Head of caudate nucleus (tissue), 42 donors: ENCODE measurements at regions of chr5 and their contacts with region 1.

Region 1: GRCh38 chr5:61817472-61818326 is 485.6 kb downstream of the ZSWIM6 start:
- DNase-seq: peak; percentile 51 to 90 (median 76)

Region 2: DNA sequence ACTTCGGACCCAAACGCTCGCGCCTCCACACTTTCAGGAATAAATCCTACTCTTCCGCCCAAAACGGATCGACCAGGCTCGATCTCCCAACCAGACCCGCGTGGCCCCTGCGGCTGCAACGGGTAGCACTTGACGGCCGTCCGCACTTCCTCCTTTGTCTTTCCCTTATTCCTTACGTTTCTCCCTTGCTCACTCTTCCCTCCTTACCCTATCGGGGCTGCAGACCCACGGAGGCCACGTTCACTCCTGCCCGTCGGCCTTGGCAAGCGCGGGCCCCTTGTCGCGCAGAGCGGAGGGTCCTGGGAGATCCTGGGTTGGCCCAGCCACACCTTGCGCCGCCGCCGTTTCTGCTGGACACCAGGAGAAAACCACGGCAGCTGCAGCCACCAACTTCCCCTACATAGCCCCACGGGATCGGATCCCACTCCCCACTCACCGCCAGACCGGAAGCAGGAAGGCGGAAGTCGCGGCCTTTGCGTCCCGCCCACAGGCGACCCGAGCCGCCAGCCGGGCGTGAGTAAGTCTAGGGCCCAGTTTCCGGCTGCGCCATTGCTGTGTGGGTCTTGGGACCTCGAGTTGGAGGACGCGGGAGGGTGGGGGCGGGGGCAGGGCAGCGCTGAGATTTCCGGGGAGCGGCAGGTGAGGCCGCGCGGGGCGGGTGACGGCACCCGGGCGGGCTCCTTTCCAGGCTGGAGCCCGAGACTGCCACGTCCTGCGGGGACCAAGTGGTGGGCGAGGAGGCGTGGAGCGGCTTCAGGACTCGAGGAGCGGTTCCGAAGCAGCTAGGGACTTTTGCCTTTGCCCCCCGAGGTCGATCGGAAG is 655.5 kb before region 1 on chr5 and contains the start of gene SMIM15:
- intact Hi-C with region 1: loop called (anchors 10 kb)
- DNase-seq: peak; percentile 64 to 94 (median 86)

Region 3: DNA sequence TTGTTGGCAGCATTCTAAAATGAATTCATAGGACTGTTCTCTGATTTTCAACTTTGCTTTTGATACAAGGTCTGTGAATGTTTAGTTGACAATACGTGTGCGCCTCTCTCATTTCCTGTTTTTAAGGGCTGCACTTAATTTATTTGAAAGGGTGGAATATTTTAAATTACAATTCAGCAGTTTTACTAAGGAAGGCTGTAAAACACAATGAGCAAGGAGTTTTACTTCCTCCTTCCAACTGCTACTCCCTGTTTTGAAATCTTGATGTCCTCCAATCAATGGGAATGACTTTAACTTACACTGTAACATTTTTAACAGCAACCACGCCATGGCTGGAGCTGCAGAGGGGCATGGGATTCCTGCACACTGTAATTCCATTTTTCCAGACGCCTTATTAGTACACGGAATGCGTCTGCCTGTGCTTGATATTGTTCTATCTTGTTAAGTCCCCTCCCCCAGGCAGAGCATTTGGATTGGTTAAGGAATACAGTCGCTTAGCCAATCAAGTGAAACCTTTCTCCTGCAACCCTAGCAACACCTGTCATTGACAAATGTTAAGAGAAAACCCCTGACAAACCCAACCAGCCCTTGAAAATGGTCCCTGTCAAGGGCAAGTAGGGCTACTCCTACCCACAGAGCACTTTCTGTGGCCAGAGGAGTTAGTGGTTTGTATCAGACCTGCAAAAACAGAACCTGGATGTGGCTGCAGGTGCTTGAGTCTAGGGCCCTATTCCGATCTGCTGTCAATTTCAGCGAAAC is 498.1 kb before region 1 on chr5:
- intact Hi-C with region 1: loop called (anchors 10 kb)
- DNase-seq: peak in 5 of 42 donors; percentile 38 to 52 (median 44)

Region 4: DNA sequence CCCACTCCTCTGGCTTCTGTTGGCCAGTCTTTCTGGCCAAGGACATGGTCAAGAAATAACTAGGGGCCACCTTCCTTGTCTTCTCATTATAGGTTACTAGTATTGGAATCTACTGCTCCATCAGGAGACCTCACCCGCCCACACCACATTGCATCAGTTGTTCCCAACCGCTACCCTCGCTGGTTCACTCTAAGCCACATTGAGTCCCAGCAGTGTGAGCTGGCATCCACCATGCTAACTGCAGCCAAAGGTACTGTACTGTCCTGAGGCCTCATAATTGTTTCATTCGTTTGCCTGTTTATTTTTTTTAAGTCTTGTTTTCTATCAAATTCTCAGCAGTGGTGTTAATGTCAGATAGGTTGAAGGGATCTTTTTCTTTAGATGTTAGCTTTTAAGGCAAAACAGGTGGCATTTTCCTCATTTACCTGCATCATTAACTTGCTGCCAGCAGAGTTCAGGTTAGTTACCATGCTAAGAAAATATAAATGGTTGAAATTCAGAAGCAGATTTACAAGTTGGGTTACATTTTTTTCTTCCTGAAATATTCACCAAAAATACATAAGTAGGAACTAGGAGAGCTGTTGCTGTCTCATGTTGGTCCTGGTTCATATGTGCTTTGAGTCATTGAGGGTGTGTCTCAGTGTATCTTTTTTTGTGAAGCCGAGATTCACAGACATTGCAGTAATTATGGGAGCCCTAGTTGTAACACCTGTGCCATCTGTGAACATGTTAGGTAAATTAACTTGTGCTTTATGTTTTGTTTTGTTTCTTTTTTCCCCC is 278.8 kb before region 1 on chr5:
- intact Hi-C with region 1: loop called (anchors 5 kb)
- DNase-seq: no peak

Region 5: GRCh38 chr5:61641747-61642578 is 175.7 kb before region 1 on chr5:
- intact Hi-C with region 1: loop called (anchors 10 kb)
- DNase-seq: no peak

Region 6: GRCh38 chr5:61768692-61769281 is 48.9 kb before region 1 on chr5:
- intact Hi-C with region 1: no loop called
- DNase-seq: no peak